ENCODE measurements at regions of chr20 and their contacts with region 1.

Region 1: DNA sequence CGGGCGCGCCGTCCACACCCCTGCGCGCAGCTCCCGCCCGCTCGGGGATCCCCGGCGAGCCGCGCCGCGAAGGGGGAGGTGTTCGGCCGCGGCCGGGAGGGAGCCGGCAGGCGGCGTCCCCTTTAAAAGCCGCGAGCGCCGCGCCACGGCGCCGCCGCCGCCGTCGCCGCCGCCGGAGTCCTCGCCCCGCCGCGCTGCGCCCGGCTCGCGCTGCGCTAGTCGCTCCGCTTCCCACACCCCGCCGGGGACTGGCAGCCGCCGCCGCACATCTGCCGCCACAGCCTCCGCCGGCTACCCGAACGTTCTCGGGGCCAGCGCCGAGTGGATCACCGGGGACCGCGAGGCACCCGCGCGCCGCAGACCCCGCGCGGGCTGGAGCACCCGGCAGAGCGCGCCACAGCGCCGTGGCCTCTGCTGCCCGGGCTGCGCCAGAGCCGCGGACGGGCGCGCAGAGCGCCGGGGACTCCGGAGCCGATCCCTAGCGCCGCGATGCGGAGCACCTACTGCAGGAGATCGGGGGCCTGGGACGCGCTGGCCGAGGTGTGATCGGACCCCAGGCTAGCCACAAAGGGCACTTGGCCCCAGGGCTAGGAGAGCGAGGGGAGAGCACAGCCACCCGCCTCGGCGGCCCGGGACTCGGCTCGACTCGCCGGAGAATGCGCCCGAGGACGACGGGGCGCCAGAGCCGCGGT is at the start of gene BMP2:
- DNase-seq: peak; percentile 82
- H3K4me3 ChIP-seq: peak within 1 kb of the TSS; percentile 52 to 63
- H3K27ac ChIP-seq: no peak within 1 kb of the TSS
- H3K4me1 ChIP-seq: no peaks in the 10 kb centered on the region; a peak in 1 of 4 replicates
- H3K27me3 ChIP-seq: peaks cover 16% of the 10 kb centered on the region; the same call in 1 of the 2 replicates
- CTCF ChIP-seq: no peak
- EP300 ChIP-seq: no peak
- RAD21 ChIP-seq: no peak
- polyA plus RNA-seq, gene BMP2: 0.19 and 0.25 TPM in 2 replicates

Region 2: GRCh38 chr20:6756693-6757595 is 10.7 kb before region 1 on chr20:
- CTCF ChIA-PET with region 1: interaction called, 17 read pairs
- POLR2A ChIA-PET with region 1: no interaction called
- DNase-seq: no peak
- H3K4me3 ChIP-seq: no peak overlapping the region
- H3K27ac ChIP-seq: no peak overlapping the region
- H3K4me1 ChIP-seq: no peaks in the 10 kb centered on the region
- H3K27me3 ChIP-seq: no peaks in the 10 kb centered on the region
- CTCF ChIP-seq: no peak
- EP300 ChIP-seq: no peak
- RAD21 ChIP-seq: no peak